PC-3 (cell line): ENCODE measurements at regions of chr7 and their contacts with region 1.

Region 1: DNA sequence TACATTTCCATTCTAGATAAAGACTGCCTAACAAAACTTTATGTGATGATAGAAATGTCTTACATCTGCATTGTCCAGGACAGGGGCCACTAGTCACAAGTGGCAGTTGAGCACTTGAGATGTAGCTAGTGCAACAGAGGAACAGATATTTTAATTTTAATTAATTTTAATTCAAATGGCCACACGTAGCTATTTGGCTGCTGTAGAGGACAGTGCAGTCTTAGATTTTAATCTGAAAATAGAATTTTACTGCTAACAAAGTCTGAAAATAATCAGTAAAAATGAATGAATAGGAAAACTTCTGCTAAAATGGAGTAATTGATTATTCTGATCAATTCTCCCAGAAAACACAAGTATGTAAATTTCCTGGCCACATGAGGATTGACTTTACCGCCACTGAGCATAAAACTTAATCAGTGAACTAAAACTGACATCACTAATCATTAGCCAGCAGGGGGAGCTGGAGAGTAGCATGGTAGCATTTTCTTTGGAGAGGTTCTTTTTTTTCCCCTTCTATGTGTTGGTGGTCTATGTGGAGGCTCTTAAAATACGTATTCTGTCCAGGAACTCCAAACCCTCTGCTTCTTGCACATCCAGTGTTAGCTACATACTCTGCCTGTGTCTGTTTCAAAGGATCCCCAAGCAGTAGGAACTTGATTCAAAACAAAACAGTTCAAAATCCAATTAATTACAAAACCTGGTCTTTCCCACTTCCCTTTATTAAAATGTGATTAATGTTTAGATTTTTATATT is 52.1 kb downstream of the TSPAN12 start:
- DNase-seq: peak; percentile 72
- ATAC-seq: peak; percentile 61
- H3K4me3 ChIP-seq: no peak overlapping the region
- H3K27ac ChIP-seq: no peak overlapping the region
- H3K4me1 ChIP-seq: no peaks in the 10 kb centered on the region
- H3K27me3 ChIP-seq: no peaks in the 10 kb centered on the region
- CTCF ChIP-seq: peak; percentile 83

Region 2: DNA sequence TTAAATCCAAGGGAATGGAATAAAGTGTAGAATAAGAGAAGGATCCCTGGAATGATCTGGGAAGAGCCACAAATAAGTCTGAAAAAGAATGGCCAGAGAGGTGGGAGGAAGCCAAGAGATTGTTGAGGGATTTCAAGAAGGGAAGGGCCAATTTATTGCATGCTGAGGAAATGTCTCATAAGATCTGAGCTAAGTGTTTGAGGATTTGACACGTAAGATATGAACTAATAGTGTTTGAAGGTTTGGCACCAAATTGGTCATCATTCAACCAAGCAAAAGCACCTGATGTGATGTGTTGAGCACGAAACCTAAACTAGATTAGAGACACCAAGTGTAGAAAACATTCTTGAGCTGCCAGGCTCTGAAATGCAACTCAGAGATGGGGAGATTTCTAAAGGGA is 45.8 kb before region 1 on chr7:
- CTCF ChIA-PET with region 1: no interaction called
- POLR2A ChIA-PET with region 1: no interaction called
- intact Hi-C with region 1: no loop called
- DNase-seq: no peak
- ATAC-seq: no peak
- H3K4me3 ChIP-seq: no peak overlapping the region
- H3K27ac ChIP-seq: no peak overlapping the region
- H3K4me1 ChIP-seq: no peaks in the 10 kb centered on the region
- H3K27me3 ChIP-seq: no peaks in the 10 kb centered on the region
- CTCF ChIP-seq: no peak

Region 3: GRCh38 chr7:121107923-121108498 is 302.2 kb after region 1 on chr7:
- CTCF ChIA-PET with region 1: no interaction called
- POLR2A ChIA-PET with region 1: no interaction called
- intact Hi-C with region 1: loop called (anchors 5 kb)
- DNase-seq: peak; percentile 87
- ATAC-seq: peak; percentile 98
- H3K4me3 ChIP-seq: no peak overlapping the region
- H3K27ac ChIP-seq: no peak overlapping the region
- H3K4me1 ChIP-seq: peaks cover 17% of the 10 kb centered on the region
- H3K27me3 ChIP-seq: no peaks in the 10 kb centered on the region
- CTCF ChIP-seq: peak; percentile 86